Left ventricle myocardium superior (tissue), 1 donor: ENCODE measurements at regions of chr15 and their contacts with region 1.

Region 1: DNA sequence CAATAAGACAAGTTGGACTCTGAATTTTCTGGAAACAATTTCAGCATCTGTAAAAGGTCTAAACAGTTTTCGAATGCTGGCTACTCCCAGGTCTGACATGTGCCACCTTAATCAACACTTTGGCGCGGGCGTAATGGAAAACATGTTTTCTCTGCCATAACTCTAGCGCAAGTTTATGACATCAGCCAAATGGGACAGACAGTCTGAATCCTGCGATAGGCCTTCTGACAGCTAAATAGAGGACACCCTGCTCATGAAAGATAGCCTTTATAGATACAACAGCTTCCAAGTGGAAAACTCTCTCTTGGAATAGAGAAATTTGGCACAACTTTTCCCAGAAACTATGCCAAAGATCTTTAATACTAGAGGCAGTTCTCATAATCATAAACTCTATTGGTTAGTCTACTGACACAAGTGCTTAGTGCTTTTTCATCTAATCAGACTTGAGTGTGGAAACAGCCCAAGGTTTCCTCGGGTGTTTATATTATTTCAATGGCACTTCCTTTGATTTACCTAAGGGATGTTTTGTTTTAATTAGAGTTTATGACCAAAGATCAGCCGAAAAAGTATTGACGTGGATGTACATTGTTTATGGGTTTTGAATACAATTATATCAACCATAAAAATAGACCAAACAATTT is 120.1 kb upstream of the DPH6 start:
- DNase-seq: peak; percentile 55
- ATAC-seq: peak; percentile 97

Region 2: DNA sequence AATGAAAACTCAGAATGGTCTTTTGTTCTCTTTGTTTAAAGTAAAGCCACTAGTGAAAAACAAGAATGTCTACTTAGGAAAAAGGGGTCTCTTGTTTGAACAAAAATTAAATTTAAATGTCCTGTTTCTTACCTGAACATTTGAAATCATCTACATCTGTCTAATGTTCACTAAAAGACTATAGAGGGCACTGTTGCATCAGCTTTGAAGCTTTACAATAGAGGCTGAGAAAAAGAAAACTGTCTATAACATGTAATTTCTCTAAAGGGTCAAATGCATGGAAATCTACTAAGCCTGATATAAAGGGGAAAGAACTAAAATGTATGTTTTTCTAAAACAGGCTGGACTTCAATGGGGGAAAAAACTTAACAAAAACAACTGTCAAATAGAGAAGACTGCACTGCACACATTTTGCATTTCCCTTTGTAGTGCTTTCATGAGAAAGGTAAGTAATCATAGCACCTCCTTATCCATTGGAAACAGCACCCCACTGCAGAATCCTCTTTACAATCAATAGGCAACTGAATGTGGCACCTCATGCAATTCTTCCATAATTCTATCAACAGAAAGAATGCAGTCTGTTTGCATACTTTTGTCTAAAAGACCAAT is 146.4 kb before region 1 on chr15:
- intact Hi-C with region 1: loop called (anchors 5 kb)
- DNase-seq: no peak
- ATAC-seq: peak; percentile 69

Region 3: GRCh38 chr15:35545824-35546510 is 120.0 kb before region 1 on chr15 and contains the start of gene DPH6:
- intact Hi-C with region 1: loop called (anchors 10 kb)
- DNase-seq: peak; percentile 93
- ATAC-seq: peak; percentile 95
- total RNA-seq, gene DPH6: 17.3 TPM

Region 4: DNA sequence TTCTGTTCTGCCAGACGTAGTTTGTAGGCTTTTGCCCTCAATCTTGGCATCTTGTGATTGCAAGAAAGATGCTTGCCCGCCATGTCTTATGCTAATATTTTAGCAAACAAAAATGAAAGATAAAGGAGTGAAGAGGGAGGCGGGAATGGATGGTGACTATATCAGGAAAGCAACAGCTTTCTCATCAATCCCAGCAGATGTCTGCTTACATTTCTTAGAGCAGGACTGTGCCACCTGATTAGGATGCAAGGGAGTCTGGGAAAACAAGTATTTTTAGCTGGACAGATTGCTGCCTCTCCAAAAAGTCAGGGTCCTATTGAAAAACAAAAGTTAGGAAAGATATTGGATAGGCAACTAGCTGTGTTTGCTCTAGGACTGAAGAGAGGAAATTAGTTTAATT is 85.4 kb before region 1 on chr15:
- intact Hi-C with region 1: no loop called
- DNase-seq: no peak
- ATAC-seq: no peak

Region 5: DNA sequence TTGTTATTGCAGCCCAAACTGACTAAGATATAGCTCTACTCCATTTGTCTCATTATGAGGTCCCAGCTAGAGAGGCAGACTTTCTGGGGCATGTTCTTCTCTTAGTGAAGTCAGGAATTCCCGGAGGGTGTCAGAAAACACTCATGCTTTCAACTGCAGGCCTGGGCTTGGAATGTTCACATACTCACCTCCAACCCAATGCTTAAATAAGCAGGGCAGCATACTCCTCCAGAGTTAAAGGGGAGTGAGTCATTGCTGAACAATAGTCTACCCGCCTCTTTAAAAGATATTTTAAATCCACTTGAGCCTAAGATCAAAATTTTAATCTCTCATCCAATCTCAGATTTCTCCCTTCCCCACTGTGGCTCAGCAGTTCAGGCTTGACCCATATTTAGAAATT is 47.7 kb after region 1 on chr15:
- intact Hi-C with region 1: no loop called
- DNase-seq: no peak
- ATAC-seq: no peak